Pancreas (tissue), 10 donors: ENCODE measurements at regions of chr15 and their contacts with region 1.

Region 1: DNA sequence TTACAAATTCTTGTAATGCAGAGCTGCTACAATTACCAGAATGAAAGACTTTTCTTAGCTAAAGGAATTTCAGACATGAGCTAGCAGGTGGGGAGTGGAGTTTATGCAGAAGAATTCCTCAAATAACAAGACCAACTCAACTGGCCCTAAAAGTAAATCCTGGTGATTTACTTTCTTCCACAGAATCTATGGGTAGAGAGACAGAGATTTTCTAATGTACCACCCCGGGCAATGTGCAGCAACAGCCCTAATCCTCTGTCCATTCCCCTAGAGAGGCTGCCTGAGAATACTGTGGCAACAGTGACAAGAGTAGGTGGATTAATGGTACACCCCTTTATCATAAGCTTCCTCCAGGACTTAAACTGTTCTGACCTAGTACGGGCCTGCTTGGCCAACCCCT is 55.2 kb downstream of the AQR start:
- DNase-seq: no peak
- ATAC-seq: no peak
- H3K4me3 ChIP-seq: no peak overlapping the region
- H3K27ac ChIP-seq: no peak overlapping the region
- H3K4me1 ChIP-seq: no peaks in the 10 kb centered on the region
- H3K27me3 ChIP-seq: no peaks in the 10 kb centered on the region
- CTCF ChIP-seq: no peak

Region 2: DNA sequence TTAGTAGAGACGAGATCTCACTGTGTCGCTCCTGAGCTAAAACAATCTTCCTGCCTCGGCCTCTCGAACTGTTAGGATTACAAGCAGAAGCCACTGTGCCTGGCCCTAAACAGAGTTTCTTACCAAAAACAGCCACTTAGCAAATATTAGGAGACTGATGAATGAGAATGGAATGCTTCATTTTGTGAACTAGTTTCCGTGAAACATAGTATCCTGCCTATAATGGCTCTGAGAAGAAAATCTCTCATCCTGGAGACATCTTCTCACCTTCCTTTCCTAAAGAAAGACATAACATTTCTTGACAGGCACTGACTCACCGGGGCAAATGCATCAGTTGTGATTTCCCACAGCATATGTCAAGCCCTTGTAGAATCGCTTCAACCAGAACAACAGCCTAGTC is 204.5 kb before region 1 on chr15:
- intact Hi-C with region 1: loop called in 1 of 3 experiments (anchors 10 kb)
- DNase-seq: no peak
- ATAC-seq: no peak
- H3K4me3 ChIP-seq: no peak overlapping the region
- H3K27ac ChIP-seq: no peak overlapping the region
- H3K4me1 ChIP-seq: no peaks in the 10 kb centered on the region
- H3K27me3 ChIP-seq: no peaks in the 10 kb centered on the region
- CTCF ChIP-seq: no peak

Region 3: DNA sequence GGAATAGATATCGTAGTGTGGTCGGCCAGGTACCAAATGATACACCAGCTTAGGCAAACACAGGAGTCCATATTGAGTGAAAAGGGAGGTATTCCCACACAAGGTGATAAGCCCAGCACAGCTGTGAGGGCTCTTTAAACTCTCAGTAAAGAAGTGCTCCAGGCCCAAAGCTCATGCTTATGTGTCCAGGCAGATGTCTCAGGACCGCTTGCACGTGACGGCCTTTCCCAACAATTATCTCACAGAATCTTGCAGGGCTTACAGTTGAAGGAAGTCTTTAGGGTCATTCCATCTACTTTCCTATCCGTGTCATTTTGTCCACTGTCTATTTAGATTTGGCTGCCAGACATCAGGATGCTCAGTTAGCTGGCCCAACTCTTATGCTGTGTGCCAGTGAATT is 89.3 kb before region 1 on chr15:
- intact Hi-C with region 1: no loop called
- DNase-seq: no peak
- ATAC-seq: no peak
- H3K4me3 ChIP-seq: no peak overlapping the region
- H3K27ac ChIP-seq: no peak overlapping the region
- H3K4me1 ChIP-seq: no peaks in the 10 kb centered on the region
- H3K27me3 ChIP-seq: no peaks in the 10 kb centered on the region
- CTCF ChIP-seq: no peak